ENCODE measurements at regions of chr6 and their contacts with region 1.

Region 1: GRCh38 chr6:66526061-66526460 is 819.0 kb upstream of the EYS start:
- DNase-seq: no peak
- H3K4me3 ChIP-seq: no peak overlapping the region
- H3K27ac ChIP-seq: no peak overlapping the region
- H3K4me1 ChIP-seq: no peaks in the 10 kb centered on the region
- H3K27me3 ChIP-seq: no peaks in the 10 kb centered on the region
- CTCF ChIP-seq: no peak

Region 2: DNA sequence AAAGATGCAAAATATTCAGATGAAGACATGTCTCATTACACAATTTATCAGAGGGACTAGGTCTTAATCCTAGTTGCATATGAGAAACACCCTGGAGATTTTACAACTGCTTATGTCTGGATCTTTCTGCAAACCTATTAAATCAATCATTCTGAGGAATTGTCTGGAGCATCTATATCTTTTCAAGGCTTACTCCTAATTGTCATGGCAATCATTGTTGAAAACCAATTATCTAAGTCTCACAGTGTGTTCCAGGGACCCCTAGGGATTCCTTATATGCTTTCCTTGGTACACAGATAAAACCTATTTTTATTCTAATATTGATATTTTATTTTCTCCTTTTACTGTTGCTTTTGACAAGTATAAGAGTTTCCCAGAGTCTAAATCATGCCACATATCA is 122.1 kb before region 1 on chr6:
- intact Hi-C with region 1: no loop called
- DNase-seq: no peak
- H3K4me3 ChIP-seq: no peak overlapping the region
- H3K27ac ChIP-seq: no peak overlapping the region
- H3K4me1 ChIP-seq: no peaks in the 10 kb centered on the region
- H3K27me3 ChIP-seq: no peaks in the 10 kb centered on the region
- CTCF ChIP-seq: no peak

Region 3: DNA sequence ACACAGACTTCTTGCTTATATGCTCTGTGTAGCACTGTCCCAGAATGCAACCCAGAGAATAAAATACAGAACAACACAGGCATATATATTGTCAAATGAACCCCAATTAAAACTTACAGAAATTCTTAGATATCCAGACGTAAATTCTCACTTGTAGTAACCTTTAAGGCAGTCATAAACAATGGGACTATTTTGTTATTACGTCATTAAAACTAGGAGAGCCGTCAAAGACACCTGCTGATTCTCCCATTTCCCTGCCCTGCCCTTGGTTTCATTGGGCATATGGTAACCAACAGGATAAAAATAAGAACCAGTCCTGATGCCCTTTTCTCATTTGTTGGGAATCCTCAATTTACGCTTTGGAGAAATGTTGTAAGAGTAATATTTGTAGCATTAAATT is 52.3 kb after region 1 on chr6:
- intact Hi-C with region 1: loop called (anchors 2 kb)
- DNase-seq: no peak
- H3K4me3 ChIP-seq: no peak overlapping the region
- H3K27ac ChIP-seq: no peak overlapping the region
- H3K4me1 ChIP-seq: no peaks in the 10 kb centered on the region
- H3K27me3 ChIP-seq: no peaks in the 10 kb centered on the region
- CTCF ChIP-seq: no peak

Measured in ascending aorta (tissue), 2 donors.